Activated CD8-positive, alpha-beta memory T cell treated with anti-CD3 and anti-CD28 coated beads, Interleukin-2, amount 10 ng/mL, durations not matched to agents 7 days and 5 days (primary cell): ENCODE measurements at regions of chr7 and their contacts with region 1.

Region 1: GRCh38 chr7:24812310-24812945 is 55.2 kb upstream of the GSDME start:
- DNase-seq: peak; percentile 61
- ATAC-seq: peak; percentile 68
- H3K4me3 Mint-ChIP-seq: no peak overlapping the region
- H3K27ac Mint-ChIP-seq: peak overlapping the region; percentile 18
- H3K4me1 Mint-ChIP-seq: no peaks in the 10 kb centered on the region
- H3K27me3 Mint-ChIP-seq: no peaks in the 10 kb centered on the region

Region 2: GRCh38 chr7:24685708-24686107 is 126.7 kb before region 1 on chr7:
- CTCF ChIA-PET with region 1: no interaction called
- DNase-seq: no peak
- ATAC-seq: no peak
- H3K4me3 Mint-ChIP-seq: no peak overlapping the region
- H3K27ac Mint-ChIP-seq: no peak overlapping the region
- H3K4me1 Mint-ChIP-seq: no peaks in the 10 kb centered on the region
- H3K27me3 Mint-ChIP-seq: no peaks in the 10 kb centered on the region

Region 3: DNA sequence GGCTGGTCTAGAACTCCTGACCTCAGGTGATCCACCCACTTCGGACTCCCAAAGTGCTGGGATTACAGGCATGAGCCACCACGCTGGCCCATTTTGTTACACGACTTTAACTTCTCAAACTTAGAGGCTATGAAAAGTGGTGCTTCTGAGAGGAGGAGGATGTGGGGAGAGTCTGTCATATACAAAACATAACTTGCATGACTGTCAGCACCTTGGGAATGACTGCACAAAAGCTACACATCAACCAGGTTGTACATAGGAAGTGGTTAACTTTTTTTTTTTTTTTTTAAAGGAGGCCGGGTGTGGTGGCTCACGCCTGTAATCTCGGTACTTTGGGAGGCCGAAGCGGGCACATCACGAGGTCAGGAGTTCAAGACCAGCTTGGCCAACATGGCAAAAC is 11.8 kb before region 1 on chr7:
- CTCF ChIA-PET with region 1: interaction called, 19 read pairs
- DNase-seq: peak; percentile 45
- ATAC-seq: peak; percentile 71
- H3K4me3 Mint-ChIP-seq: no peak overlapping the region
- H3K27ac Mint-ChIP-seq: peak overlapping the region; percentile 5
- H3K4me1 Mint-ChIP-seq: peaks cover 17% of the 10 kb centered on the region
- H3K27me3 Mint-ChIP-seq: no peaks in the 10 kb centered on the region

Region 4: GRCh38 chr7:25069900-25070443 is 257.5 kb after region 1 on chr7:
- CTCF ChIA-PET with region 1: interaction called, 54 read pairs
- DNase-seq: peak; percentile 66
- ATAC-seq: peak; percentile 79
- H3K4me3 Mint-ChIP-seq: no peak overlapping the region
- H3K27ac Mint-ChIP-seq: no peak overlapping the region
- H3K4me1 Mint-ChIP-seq: peaks cover 16% of the 10 kb centered on the region
- H3K27me3 Mint-ChIP-seq: no peaks in the 10 kb centered on the region

Region 5: GRCh38 chr7:25098096-25099046 is 285.9 kb after region 1 on chr7:
- CTCF ChIA-PET with region 1: interaction called, 92 read pairs
- DNase-seq: peak; percentile 77
- ATAC-seq: peak; percentile 86
- H3K4me3 Mint-ChIP-seq: no peak overlapping the region
- H3K27ac Mint-ChIP-seq: no peak overlapping the region
- H3K4me1 Mint-ChIP-seq: peaks cover 8% of the 10 kb centered on the region
- H3K27me3 Mint-ChIP-seq: peaks cover 10% of the 10 kb centered on the region